ENCODE measurements at regions of chr3 and their contacts with region 1.

Region 1: GRCh38 chr3:13452490-13453335 is 27.4 kb upstream of the HDAC11 start:
- DNase-seq: no peak
- H3K4me3 ChIP-seq: peak overlapping the region in 7 of 8 donors; percentile 15 to 73 (median 48)
- H3K27ac ChIP-seq: peak overlapping the region; percentile 22 to 89 (median 86)
- H3K4me1 ChIP-seq: peaks cover 7 to 22% (median 17%) of the 10 kb centered on the region in 6 donors
- H3K27me3 ChIP-seq: no peaks in the 10 kb centered on the region
- CTCF ChIP-seq: peak; percentile 9 to 72 (median 62)
- POLR2A ChIP-seq: no peak

Region 2: GRCh38 chr3:12536423-12536822 is 916.3 kb before region 1 on chr3:
- intact Hi-C with region 1: no loop called
- DNase-seq: no peak
- H3K4me3 ChIP-seq: no peak overlapping the region
- H3K27ac ChIP-seq: no peak overlapping the region
- H3K4me1 ChIP-seq: no peaks in the 10 kb centered on the region
- H3K27me3 ChIP-seq: no peaks in the 10 kb centered on the region
- CTCF ChIP-seq: no peak
- POLR2A ChIP-seq: no peak

Region 3: DNA sequence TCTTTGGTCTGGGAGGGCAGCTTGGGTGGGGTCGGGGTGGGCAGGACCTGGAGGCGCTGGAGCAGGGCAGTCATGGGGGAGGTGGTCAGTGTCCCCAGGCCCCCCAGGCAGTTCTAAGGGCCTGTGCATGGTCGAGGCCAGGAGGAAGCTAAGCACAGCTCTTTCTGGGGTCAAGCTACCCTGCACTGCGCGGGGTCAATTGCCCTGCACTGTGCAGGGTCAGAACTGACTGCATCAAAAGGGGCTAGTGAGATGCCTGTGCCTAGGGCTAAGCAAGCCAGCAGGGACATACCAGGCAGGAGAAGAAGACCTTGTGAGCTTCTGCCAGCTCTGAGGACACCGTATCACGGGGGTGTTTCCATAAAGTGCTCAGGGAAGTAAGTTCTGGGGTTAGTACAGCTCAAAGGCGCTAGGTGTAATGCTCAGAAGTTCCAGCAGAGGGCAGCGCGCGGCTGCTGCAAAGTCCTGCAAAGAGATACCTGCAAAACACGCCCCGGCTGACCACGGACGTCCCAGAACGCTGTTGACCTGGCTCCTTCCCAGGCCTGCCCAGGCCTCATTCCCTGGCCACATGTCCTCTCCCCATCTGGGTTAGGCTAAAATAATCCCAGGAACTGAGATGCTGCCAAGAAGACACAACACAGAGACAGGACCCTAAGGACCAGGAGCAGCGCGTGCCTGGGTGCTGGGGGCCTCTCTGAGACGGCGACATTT is 360.7 kb before region 1 on chr3:
- intact Hi-C with region 1: loop called (anchors 5 kb)
- DNase-seq: peak; percentile 95
- H3K4me3 ChIP-seq: no peak overlapping the region
- H3K27ac ChIP-seq: no peak overlapping the region
- H3K4me1 ChIP-seq: peaks cover 15 to 48% (median 31%) of the 10 kb centered on the region in 6 donors
- H3K27me3 ChIP-seq: peaks cover 0 to 8% (median 0%) of the 10 kb centered on the region in 7 donors
- CTCF ChIP-seq: peak; percentile 90 to 98 (median 96)
- POLR2A ChIP-seq: no peak

Region 4: DNA sequence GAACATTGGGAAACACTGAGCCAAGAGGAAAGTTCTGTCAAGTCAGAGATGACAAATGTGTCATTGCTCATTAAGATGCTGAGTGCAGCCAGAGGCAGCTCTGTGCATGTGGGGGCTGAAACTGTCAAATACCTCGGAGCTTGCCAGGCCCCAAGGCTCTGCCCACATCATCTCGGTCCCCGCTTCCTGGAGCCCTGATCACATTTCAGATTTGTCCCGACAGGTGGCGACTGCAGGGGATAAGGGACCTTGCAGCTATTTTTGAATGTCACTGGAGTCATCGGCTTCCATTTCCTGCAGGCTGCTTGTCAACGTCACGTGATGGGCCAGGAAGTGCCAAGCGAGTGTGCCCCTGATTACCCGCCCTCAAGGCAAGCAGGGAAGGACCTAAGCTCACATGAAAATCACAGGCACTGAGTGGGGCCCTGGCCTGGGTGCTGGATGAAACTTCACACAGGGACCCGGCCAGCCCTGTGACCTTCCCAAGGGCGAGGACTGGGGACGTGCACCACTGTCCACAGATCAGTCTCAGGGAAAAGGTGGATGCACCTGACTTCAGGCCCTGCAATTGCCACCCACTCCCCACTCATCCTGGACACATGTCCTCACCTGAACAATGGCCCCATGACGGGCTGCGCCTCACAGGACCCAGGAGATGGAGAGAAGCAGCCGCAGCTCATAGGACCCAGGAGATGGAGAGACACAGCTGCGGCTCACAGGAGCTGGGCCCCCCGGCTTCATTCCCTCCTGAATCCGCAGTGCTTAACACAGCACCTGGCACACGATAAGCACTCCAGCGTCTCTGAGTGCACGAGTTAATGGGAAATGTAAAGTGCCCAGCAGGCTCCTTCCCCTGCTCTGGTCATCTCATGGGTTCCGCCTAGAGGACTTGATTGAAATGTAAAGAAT is 106.0 kb before region 1 on chr3:
- intact Hi-C with region 1: loop called (anchors 10 kb)
- DNase-seq: peak; percentile 86
- H3K4me3 ChIP-seq: no peak overlapping the region
- H3K27ac ChIP-seq: peak overlapping the region in 4 of 8 donors; percentile 16 to 76 (median 49)
- H3K4me1 ChIP-seq: peaks cover 11 to 61% (median 28%) of the 10 kb centered on the region in 6 donors
- H3K27me3 ChIP-seq: no peaks in the 10 kb centered on the region
- CTCF ChIP-seq: peak in 7 of 11 experiments; percentile 27 to 52 (median 31)
- POLR2A ChIP-seq: no peak

Region 5: GRCh38 chr3:13357074-13357473 is 95.6 kb before region 1 on chr3:
- intact Hi-C with region 1: no loop called
- DNase-seq: no peak
- H3K4me3 ChIP-seq: no peak overlapping the region
- H3K27ac ChIP-seq: no peak overlapping the region
- H3K4me1 ChIP-seq: peaks cover 0 to 26% (median 2%) of the 10 kb centered on the region in 6 donors
- H3K27me3 ChIP-seq: no peaks in the 10 kb centered on the region
- CTCF ChIP-seq: no peak
- POLR2A ChIP-seq: no peak

Region 6: DNA sequence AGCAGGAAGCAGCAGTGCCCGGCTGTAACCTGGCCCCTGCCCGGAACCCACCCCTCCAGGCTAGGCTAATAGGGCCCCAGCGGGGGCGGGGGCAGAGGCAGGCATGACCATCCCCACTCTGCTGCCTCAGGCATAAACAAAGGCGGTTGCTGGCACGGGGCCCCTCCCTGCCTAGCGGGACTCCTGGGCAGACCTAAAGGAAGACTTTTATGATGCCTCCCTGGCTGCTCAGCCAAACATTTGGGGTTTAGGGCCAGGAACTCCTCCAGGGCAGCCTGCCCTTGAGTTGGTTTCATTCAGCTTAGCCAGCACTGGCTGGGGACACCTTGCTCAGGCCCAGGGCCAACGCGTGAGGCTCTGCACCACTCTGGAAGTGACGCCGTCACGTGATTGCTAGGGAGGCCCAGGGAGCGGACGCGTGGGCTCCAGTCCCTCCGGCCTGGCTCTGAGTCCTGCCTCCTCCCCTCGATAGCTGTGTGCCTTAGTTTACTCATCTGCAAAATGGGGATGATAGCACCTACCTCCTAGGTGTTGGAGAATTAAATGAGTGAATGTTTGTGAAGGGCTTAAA is 55.1 kb after region 1 on chr3:
- intact Hi-C with region 1: no loop called
- DNase-seq: peak; percentile 79
- H3K4me3 ChIP-seq: no peak overlapping the region
- H3K27ac ChIP-seq: peak overlapping the region in 2 of 8 donors; percentile 5 to 33
- H3K4me1 ChIP-seq: peaks cover 0 to 12% (median 3%) of the 10 kb centered on the region in 6 donors
- H3K27me3 ChIP-seq: no peaks in the 10 kb centered on the region
- CTCF ChIP-seq: no peak
- POLR2A ChIP-seq: no peak

Region 7: DNA sequence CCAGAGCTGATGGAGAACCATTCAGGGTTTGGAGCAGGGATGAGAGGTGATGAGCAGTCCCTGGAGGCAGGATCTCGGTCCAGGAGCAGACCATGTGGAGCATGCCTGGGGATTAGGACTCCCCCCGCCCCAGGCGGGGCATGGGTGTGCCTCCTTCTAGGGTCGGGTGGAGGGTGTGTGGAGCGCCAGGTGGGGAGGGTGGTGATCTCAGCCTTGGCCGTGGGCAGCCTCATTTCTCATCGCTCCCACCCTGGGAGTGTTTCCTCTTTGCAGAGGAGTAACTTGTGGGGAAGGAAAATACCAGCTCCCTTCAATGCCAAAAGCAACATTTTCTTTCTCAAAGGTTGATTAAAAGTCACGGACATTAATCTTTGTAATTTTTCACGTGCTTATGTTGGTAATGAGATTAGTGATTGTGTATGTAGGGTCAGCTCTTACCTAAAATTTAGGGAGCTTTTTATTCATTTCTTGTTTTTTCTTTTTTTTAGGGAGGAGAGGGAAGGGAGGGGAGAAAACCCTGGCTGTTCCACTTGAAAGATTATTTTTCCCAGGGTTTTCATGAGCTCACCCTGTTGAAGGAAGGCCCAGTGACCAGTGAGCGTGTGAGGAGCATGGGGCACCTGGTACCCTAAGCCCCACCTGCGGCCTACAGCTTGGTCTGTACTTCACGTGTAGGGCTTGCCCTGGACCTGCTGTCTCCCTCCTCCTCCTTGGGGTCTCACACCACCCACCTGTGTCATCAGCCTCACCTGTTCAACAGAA is 107.2 kb after region 1 on chr3:
- intact Hi-C with region 1: no loop called
- DNase-seq: no peak
- H3K4me3 ChIP-seq: no peak overlapping the region
- H3K27ac ChIP-seq: no peak overlapping the region
- H3K4me1 ChIP-seq: peaks cover 8 to 42% (median 17%) of the 10 kb centered on the region in 6 donors
- H3K27me3 ChIP-seq: peaks cover 0 to 30% (median 0%) of the 10 kb centered on the region in 7 donors
- CTCF ChIP-seq: no peak
- POLR2A ChIP-seq: no peak